K562 (cell line): ENCODE measurements at regions of chr7 and their contacts with region 1.

Region 1: GRCh38 chr7:30877015-30877769 is 34.5 kb upstream of the AQP1 start:
- DNase-seq: no peak
- ATAC-seq: no peak
- H3K4me3 ChIP-seq: no peak overlapping the region
- H3K27ac ChIP-seq: no peak overlapping the region
- H3K4me1 ChIP-seq: peaks cover 5 to 10% of the 10 kb centered on the region in 2 experiments; a peak in 4 of 5 replicates
- H3K27me3 ChIP-seq: no peaks in the 10 kb centered on the region
- CTCF ChIP-seq: no peak
- EP300 ChIP-seq: no peak
- POLR2A ChIP-seq: no peak
- RAD21 ChIP-seq: no peak

Region 2: GRCh38 chr7:30831227-30831626 is 46.0 kb before region 1 on chr7:
- CTCF ChIA-PET with region 1: no interaction called
- POLR2A ChIA-PET with region 1: no interaction called
- in situ Hi-C with region 1: no loop called
- intact Hi-C with region 1: no loop called
- DNase-seq: no peak
- ATAC-seq: no peak
- H3K4me3 ChIP-seq: no peak overlapping the region
- H3K27ac ChIP-seq: no peak overlapping the region
- H3K4me1 ChIP-seq: no peaks in the 10 kb centered on the region
- H3K27me3 ChIP-seq: no peaks in the 10 kb centered on the region
- CTCF ChIP-seq: no peak
- EP300 ChIP-seq: no peak
- POLR2A ChIP-seq: no peak
- RAD21 ChIP-seq: no peak

Region 3: GRCh38 chr7:30866939-30867338 is 10.3 kb before region 1 on chr7:
- CTCF ChIA-PET with region 1: no interaction called
- POLR2A ChIA-PET with region 1: interaction called, 11 read pairs
- in situ Hi-C with region 1: no loop called
- intact Hi-C with region 1: no loop called
- DNase-seq: peak in 1 of 4 experiments; percentile 13
- ATAC-seq: no peak; the same call in 2 of the 3 replicates
- H3K4me3 ChIP-seq: no peak overlapping the region
- H3K27ac ChIP-seq: no peak overlapping the region
- H3K4me1 ChIP-seq: peaks cover 2 to 8% of the 10 kb centered on the region in 2 experiments; a peak in 3 of 5 replicates
- H3K27me3 ChIP-seq: no peaks in the 10 kb centered on the region
- CTCF ChIP-seq: no peak
- EP300 ChIP-seq: no peak
- POLR2A ChIP-seq: no peak
- RAD21 ChIP-seq: no peak